ENCODE measurements at regions of chr4 and their contacts with region 1.

Region 1: DNA sequence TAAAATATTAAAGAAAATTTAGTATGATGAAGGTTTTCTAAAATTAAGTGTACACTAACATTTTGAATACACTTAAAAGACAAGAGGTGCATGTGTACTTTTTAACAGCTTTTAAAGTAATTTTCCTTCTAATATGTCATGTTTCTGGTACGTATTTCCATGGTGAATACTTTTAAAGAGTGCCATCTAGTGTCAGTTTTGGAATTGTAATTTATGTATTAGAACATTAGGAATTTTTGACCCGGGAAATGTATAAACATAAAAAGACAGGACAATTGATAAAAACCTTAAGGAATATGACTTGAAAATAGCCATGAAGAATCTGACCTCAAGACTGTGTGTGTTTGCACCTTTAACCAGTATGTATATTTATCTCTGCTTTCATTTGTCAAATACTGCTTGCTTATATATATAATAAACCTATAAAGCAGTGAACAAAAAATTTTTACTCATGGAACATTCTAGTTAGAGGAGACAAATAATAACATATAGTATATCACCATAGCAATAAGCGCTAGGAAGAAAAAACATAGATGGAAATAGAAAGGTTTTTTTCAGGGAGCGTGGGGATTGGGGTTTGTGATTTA is 7.2 kb downstream of the GSTCD start:
- DNase-seq: no peak
- H3K4me3 Mint-ChIP-seq: no peak overlapping the region
- H3K27ac Mint-ChIP-seq: no peak overlapping the region
- H3K4me1 Mint-ChIP-seq: peaks cover 1% of the 10 kb centered on the region
- H3K27me3 Mint-ChIP-seq: no peaks in the 10 kb centered on the region

Region 2: GRCh38 chr4:105520817-105521790 is 194.7 kb before region 1 on chr4:
- intact Hi-C with region 1: loop called (anchors 5 kb)
- DNase-seq: no peak
- H3K4me3 Mint-ChIP-seq: no peak overlapping the region
- H3K27ac Mint-ChIP-seq: no peak overlapping the region
- H3K4me1 Mint-ChIP-seq: no peaks in the 10 kb centered on the region
- H3K27me3 Mint-ChIP-seq: peaks cover 5% of the 10 kb centered on the region

Measured in activated T-helper 2 cell treated with anti-CD3 and anti-CD28 coated beads, Interferon-gamma antibody, Interleukin-2, Interleukin-4, amounts not matched to agents 10 μg/mL and 5 μg/mL and 100 μg/mL, durations not matched to agents 14 hours and 24 hours and 36 hours (primary cell).